ENCODE measurements at regions of chr18 and their contacts with region 1.

Region 1: DNA sequence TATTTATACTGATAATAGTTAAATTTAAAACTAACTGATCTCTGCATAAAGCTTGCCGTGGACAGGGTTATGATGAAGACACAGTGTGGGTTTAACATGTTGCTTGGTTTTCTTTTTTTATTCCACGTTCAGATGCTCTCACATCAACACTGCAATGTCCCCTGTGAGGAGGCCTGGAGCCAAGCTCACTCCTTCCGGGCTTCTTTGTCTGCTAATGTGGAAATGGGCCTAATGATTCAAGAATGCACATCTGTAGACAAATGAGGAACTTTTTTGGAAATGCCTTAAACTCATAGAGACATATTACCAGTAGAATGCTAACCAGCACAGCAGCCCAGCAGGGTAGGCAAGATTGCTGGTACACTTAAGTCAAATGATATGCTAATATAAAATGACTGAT is 208.0 kb downstream of the GALR1 start:
- DNase-seq: no peak
- H3K4me3 ChIP-seq: no peak overlapping the region
- H3K27ac ChIP-seq: no peak overlapping the region
- H3K4me1 ChIP-seq: no peaks in the 10 kb centered on the region
- H3K27me3 ChIP-seq: no peaks in the 10 kb centered on the region
- CTCF ChIP-seq: no peak

Region 2: GRCh38 chr18:77304268-77304667 is 153.4 kb before region 1 on chr18:
- CTCF ChIA-PET with region 1: no interaction called
- dilution Hi-C with region 1: no loop called
- in situ Hi-C with region 1: no loop called
- intact Hi-C with region 1: no loop called
- DNase-seq: no peak
- H3K4me3 ChIP-seq: no peak overlapping the region
- H3K27ac ChIP-seq: no peak overlapping the region
- H3K4me1 ChIP-seq: no peaks in the 10 kb centered on the region
- H3K27me3 ChIP-seq: no peaks in the 10 kb centered on the region
- CTCF ChIP-seq: no peak

Region 3: GRCh38 chr18:77376043-77376732 is 81.5 kb before region 1 on chr18:
- CTCF ChIA-PET with region 1: no interaction called
- dilution Hi-C with region 1: loop called (anchors 5 kb)
- in situ Hi-C with region 1: no loop called
- intact Hi-C with region 1: no loop called
- DNase-seq: no peak
- H3K4me3 ChIP-seq: no peak overlapping the region
- H3K27ac ChIP-seq: no peak overlapping the region
- H3K4me1 ChIP-seq: no peaks in the 10 kb centered on the region
- H3K27me3 ChIP-seq: no peaks in the 10 kb centered on the region
- CTCF ChIP-seq: no peak